PC-9 (cell line): ENCODE measurements at regions of chr17 and their contacts with region 1.

Region 1: DNA sequence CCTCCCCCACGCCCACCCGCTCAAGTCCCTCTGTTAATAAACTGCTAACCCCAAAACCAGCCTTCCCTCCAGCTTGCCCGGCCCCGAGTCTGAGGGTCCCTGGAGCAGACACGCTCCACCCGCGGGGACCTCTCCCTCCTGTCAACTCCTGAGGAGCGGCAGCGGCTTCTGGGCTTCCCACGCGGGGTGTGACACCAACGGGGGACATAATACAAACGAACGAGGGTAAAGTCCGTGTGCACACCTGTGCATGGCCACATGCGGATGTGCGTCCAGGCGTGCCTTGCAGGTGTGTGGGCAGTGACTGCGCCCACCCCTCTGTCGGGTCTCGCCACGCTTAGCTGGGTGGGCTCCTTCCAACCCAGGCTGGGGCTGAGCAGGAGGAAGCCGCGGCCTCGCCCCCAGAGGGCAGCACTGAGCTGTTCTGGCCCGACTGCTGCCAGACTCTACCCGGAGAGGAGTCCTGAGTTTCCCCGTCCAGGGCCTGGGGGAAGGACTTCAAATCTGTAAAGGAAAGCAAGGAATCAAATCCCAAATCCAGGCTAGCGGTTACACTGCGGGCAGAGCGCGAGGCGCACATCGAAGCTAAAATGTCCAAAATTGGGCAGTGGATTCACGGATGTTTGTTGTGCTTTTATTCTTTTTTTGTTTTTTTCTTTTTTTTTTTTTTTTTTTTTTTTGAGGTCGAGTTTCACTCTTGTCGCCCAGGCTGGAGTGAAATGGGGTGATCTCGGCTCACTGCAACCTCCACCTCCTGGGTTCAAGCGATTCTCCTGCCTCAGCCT is 24.2 kb upstream of the KRT17 start:
- DNase-seq: peak; percentile 66 to 85
- H3K4me3 ChIP-seq: peak overlapping the region; percentile 46
- H3K27ac ChIP-seq: peak overlapping the region; percentile 68
- H3K4me1 ChIP-seq: peaks cover 58% of the 10 kb centered on the region
- H3K27me3 ChIP-seq: no peaks in the 10 kb centered on the region
- CTCF ChIP-seq: peak; percentile 93

Region 2: GRCh38 chr17:40803617-40804082 is 845.0 kb before region 1 on chr17:
- CTCF ChIA-PET with region 1: no interaction called
- POLR2A ChIA-PET with region 1: no interaction called
- intact Hi-C with region 1: loop called (anchors 5 kb)
- DNase-seq: peak; percentile 74 to 82
- H3K4me3 ChIP-seq: no peak overlapping the region
- H3K27ac ChIP-seq: 0 out of 2 replicates have a peak overlapping the region, but pooled peaks have one; percentile 18
- H3K4me1 ChIP-seq: peaks cover 9% of the 10 kb centered on the region
- H3K27me3 ChIP-seq: no peaks in the 10 kb centered on the region
- CTCF ChIP-seq: peak; percentile 94

Region 3: GRCh38 chr17:40903129-40904065 is 745.2 kb before region 1 on chr17:
- CTCF ChIA-PET with region 1: no interaction called
- POLR2A ChIA-PET with region 1: interaction called, 14 read pairs
- intact Hi-C with region 1: no loop called
- DNase-seq: peak in 1 of 2 experiments; percentile 96
- H3K4me3 ChIP-seq: peak overlapping the region; percentile 24; the same call in 1 of the 2 replicates
- H3K27ac ChIP-seq: peak overlapping the region; percentile 98
- H3K4me1 ChIP-seq: peaks cover 51% of the 10 kb centered on the region
- H3K27me3 ChIP-seq: no peaks in the 10 kb centered on the region
- CTCF ChIP-seq: no peak

Region 4: GRCh38 chr17:41579484-41580243 is 68.9 kb before region 1 on chr17:
- CTCF ChIA-PET with region 1: interaction called, 17 read pairs
- POLR2A ChIA-PET with region 1: interaction called, 16 read pairs
- intact Hi-C with region 1: loop called (anchors 1 kb)
- DNase-seq: peak; percentile 62 to 90
- H3K4me3 ChIP-seq: no peak overlapping the region
- H3K27ac ChIP-seq: peak overlapping the region; percentile 37
- H3K4me1 ChIP-seq: peaks cover 56% of the 10 kb centered on the region
- H3K27me3 ChIP-seq: no peaks in the 10 kb centered on the region
- CTCF ChIP-seq: peak; percentile 84

Region 5: GRCh38 chr17:41665566-41666236 is 17.1 kb after region 1 on chr17:
- CTCF ChIA-PET with region 1: interaction called, 39 read pairs
- POLR2A ChIA-PET with region 1: interaction called, 3 read pairs
- intact Hi-C with region 1: loop called (anchors 1 kb)
- DNase-seq: peak; percentile 75 to 90
- H3K4me3 ChIP-seq: peak overlapping the region; percentile 46; the same call in 1 of the 2 replicates
- H3K27ac ChIP-seq: peak overlapping the region; percentile 29; the same call in 1 of the 2 replicates
- H3K4me1 ChIP-seq: peaks cover 26% of the 10 kb centered on the region
- H3K27me3 ChIP-seq: no peaks in the 10 kb centered on the region
- CTCF ChIP-seq: peak; percentile 91